ENCODE measurements at regions of chr3 and their contacts with region 1.

Region 1: DNA sequence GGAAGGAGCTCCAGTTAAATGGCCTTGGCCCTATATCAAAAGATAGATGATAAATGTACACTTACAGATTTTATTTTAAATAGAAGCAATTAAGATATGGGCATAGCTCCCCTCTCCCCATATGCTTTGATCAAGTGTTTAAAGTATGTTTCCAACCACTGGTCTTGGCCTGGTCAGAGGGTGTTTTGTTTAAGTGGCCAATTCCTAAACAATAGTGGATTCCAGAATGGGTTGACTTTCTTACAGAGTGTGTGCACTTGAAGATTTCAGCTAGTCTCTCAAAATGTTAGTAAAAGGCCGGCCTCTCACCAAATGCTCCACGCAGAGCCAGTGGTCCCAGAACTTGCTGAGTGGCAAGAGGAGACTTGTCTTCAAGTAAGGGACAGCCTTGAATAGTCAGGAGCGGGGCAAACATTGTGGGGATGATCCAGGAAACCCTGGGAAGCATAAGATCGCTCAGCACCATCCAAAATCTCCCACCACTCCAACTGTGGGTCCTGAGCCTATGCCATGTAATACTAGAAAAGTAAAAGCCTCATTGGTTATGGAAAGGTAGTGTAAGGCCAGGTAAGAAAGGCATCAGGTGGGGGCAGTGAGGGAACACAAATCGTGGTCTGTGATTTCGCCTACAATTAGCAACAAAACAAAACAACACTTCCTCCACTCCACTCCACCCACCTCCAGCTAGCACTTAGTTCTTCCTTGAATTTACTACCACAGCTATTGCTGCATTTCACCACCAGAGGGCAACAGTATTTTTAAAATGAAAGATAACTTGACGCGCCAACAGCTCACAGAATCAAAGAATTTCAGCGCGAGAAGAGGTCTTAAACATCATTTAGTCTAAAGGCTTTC is 4.8 kb downstream of the RARRES1 start:
- DNase-seq: no peak
- H3K4me3 ChIP-seq: peak overlapping the region; percentile 11
- H3K27ac ChIP-seq: peak overlapping the region; percentile 41
- H3K4me1 ChIP-seq: peaks cover 57% of the 10 kb centered on the region
- H3K27me3 ChIP-seq: no peaks in the 10 kb centered on the region
- CTCF ChIP-seq: peak; percentile 89

Region 2: GRCh38 chr3:158672293-158673176 is 54.9 kb before region 1 on chr3 and contains the start of gene LXN:
- intact Hi-C with region 1: loop called (anchors 10 kb)
- DNase-seq: peak; percentile 84
- H3K4me3 ChIP-seq: peak within 1 kb of the TSS; percentile 68
- H3K27ac ChIP-seq: peak within 1 kb of the TSS; percentile 80
- H3K4me1 ChIP-seq: peaks cover 24% of the 10 kb centered on the region
- H3K27me3 ChIP-seq: no peaks in the 10 kb centered on the region
- CTCF ChIP-seq: peak; percentile 71
- total RNA-seq, gene LXN: 3.2 TPM